ENCODE measurements at regions of chr2 and their contacts with region 1.

Region 1: DNA sequence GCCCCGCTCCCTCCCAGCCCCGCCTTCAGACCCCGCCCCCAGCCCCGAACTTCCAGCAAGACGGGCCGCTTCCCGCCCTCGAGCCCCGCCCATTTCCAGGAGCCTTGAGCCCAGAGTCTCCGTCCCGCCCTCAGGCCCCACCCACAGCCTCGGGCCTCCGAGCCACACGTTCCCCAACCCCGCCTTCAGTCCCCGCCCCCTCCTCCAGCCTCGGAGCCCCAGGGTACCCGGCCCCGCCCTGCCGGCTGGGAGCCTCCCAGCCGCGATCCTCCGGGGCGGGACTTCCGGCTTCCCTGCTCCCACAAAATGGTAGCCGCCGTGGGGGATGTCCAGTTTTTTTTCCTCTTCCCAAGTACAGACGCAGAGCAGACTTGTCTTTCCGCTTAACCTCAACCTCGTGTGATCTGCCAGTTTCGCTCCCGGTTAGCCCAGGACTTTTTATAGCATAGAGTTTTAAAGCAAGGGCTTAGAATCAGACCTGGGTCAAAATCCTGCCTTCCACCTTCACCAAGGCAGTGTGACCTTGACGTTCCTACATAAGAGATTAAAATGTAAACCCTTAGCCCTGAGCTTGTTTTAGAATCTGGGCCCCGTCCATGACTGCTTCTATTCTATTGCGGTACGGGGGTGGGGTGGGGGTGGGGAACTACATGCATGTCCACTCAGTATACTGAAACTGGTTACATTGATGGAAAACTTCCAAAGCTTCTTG is 435 bp upstream of the GPR155 start:
- DNase-seq: peak; percentile 100
- ATAC-seq: peak; percentile 94
- H3K4me3 Mint-ChIP-seq: peak overlapping the region; percentile 98
- H3K27ac Mint-ChIP-seq: peak overlapping the region; percentile 94
- H3K4me1 Mint-ChIP-seq: peaks cover 52% of the 10 kb centered on the region
- H3K27me3 Mint-ChIP-seq: no peaks in the 10 kb centered on the region

Region 2: DNA sequence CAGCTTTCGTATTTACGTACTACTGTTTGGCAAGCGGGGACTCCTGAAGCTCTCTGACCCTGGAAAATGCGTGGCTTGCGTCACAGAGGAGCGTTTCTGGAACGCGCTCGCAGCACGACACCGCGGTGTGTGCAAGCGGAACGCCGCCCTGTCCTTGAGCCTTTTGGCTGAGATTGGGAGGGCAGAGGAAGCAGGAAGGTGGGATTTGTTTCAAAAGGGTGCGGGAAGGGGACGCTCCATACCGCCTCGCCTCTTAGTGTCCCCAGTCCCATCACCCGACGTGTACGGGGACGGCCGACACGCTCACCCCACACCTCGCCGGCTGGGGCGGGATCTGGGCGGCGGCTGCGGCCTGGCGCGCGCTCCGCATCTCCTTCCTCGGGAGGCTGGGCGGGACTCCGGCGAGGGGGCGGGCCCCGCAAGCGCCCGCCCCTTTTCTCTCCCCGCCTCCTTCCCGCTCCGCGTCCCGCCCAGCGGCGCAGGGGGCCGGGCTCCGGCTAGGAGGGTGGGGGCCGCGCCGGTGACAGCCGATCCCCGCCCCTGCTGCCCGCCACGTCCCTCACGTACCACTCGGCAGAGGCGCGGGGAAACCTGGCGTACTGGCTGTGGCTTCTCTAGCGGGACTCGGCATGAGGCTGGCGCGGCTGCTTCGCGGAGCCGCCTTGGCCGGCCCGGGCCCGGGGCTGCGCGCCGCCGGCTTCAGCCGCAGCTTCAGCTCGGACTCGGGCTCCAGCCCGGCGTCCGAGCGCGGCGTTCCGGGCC is 1931.6 kb before region 1 on chr2 and contains the start of gene PDK1:
- CTCF ChIA-PET with region 1: no interaction called
- POLR2A ChIA-PET with region 1: no interaction called
- intact Hi-C with region 1: loop called in 1 of 2 experiments (anchors 1 kb)
- DNase-seq: peak; percentile 96
- ATAC-seq: peak; percentile 89
- H3K4me3 Mint-ChIP-seq: peak within 1 kb of the TSS; percentile 88
- H3K27ac Mint-ChIP-seq: peak within 1 kb of the TSS; percentile 95
- H3K4me1 Mint-ChIP-seq: peaks cover 57% of the 10 kb centered on the region
- H3K27me3 Mint-ChIP-seq: peaks cover 6% of the 10 kb centered on the region
- total RNA-seq, gene PDK1: 56.8 to 85.5 TPM

Region 3: DNA sequence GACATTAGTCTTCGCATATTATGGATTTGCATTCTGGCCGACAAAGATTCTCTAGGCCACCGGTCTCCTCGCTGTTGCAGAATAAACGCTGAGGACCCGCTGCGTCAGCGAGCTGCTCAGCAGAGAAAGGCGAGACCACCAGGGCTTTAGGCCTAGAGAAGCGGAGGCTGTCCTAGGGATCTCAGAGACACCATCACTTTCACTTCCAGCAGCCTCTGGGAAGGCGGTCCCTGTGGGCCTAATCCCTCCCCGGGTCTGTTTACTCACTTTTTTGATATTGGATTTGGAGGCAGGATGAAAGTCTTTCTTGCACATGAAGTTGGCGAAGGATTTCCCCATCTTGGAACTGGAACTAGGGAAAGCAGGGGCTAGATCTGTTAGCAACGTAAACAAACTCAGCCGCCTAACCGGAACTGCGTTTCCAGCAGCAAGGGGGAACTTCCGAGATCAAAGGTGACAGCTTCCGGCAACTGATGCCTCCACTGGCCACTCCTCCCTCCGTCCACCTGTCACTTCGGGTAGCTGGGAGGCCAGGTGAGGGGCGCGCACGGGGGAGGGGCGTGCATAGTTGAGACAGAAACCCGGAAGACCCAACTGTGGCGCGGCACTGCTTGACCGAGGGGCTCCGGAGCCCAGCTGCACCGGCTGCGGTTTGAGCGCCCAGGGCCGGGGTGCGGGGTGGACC is 91.8 kb before region 1 on chr2 and contains the start of gene SCRN3:
- CTCF ChIA-PET with region 1: interaction called, 3 read pairs
- POLR2A ChIA-PET with region 1: no interaction called
- intact Hi-C with region 1: loop called (anchors 1 to 2 kb)
- DNase-seq: peak; percentile 85
- ATAC-seq: peak; percentile 93
- H3K4me3 Mint-ChIP-seq: peak within 1 kb of the TSS; percentile 100
- H3K27ac Mint-ChIP-seq: peak within 1 kb of the TSS; percentile 99
- H3K4me1 Mint-ChIP-seq: peaks cover 35% of the 10 kb centered on the region
- H3K27me3 Mint-ChIP-seq: no peaks in the 10 kb centered on the region
- total RNA-seq, gene SCRN3: 12.7 to 14.1 TPM

Region 4: DNA sequence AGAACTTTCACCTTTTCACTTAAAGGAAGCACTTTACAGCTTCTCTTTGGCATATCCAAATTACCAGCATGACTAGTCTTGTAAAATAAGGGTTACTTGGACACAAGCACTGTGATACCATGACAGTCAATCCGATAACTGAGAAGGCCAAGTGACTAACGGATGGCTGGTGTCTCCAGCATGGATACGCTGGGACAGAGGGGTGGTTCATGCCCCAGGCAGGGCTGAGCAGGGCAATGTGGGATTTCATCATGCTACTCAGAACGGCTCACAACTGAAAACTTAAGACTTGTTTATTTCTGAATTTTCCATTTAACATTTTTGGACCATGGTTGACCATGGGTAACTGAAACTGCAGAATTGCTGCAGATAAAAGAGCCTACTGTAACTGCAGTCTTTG is 42.7 kb after region 1 on chr2:
- CTCF ChIA-PET with region 1: no interaction called
- POLR2A ChIA-PET with region 1: no interaction called
- intact Hi-C with region 1: no loop called
- DNase-seq: no peak
- ATAC-seq: no peak
- H3K4me3 Mint-ChIP-seq: no peak overlapping the region
- H3K27ac Mint-ChIP-seq: no peak overlapping the region
- H3K4me1 Mint-ChIP-seq: peaks cover under 1% of the 10 kb centered on the region
- H3K27me3 Mint-ChIP-seq: no peaks in the 10 kb centered on the region

Region 5: DNA sequence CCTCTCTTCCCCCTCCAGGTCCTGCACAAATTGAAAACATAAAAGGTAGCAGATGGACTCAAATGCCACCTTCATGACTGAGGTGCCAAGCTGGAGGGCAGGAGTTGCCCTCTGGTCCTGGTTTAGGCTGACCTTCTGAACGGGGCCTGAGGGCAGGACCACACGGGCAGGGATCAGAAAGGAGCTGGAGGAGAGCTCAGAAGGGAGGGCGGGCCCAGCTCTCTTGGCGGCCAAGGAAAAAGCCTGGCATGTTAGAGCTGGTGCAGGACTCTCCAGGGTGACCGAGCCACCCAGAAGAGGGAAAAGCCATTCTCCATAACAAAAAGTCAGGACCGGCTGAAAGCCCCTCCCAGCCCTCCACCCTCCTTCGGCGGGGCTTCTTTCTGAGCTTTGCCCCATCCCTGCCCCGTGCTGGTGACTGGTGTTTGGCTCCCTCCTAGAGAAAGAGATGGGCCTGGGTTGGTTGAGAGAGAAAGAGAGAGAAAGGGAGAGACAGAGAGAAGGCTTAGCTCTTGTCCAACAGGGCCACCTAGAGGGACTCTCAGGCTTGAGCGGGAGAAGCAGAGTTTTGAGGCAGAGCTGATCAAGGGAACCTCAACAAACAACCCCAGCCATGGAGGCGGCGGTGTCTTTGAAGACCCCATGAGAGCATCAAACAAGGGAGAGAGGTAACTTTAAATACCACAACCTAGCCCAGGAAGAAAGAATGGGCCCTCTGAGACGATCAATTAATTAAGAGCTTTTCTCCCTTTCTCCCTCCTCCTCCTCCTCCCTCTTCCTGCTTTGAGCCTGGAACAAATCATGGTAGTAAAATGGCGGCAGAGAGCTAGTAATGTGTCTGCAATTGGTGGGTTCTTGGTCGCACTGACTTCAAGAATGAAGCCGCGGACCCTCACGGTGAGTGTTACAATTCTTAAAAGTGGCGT is 59.6 kb after region 1 on chr2:
- CTCF ChIA-PET with region 1: interaction called, 10 read pairs
- POLR2A ChIA-PET with region 1: no interaction called
- intact Hi-C with region 1: no loop called
- DNase-seq: peak; percentile 67
- ATAC-seq: peak; percentile 79
- H3K4me3 Mint-ChIP-seq: no peak overlapping the region
- H3K27ac Mint-ChIP-seq: peak overlapping the region; percentile 15
- H3K4me1 Mint-ChIP-seq: peaks cover 7% of the 10 kb centered on the region
- H3K27me3 Mint-ChIP-seq: no peaks in the 10 kb centered on the region

Region 6: GRCh38 chr2:174593574-174594203 is 106.4 kb after region 1 on chr2:
- CTCF ChIA-PET with region 1: interaction called, 6 read pairs
- POLR2A ChIA-PET with region 1: interaction called, 3 read pairs
- intact Hi-C with region 1: loop called (anchors 1 to 2 kb)
- DNase-seq: peak; percentile 80
- ATAC-seq: peak; percentile 67
- H3K4me3 Mint-ChIP-seq: peak overlapping the region; percentile 70
- H3K27ac Mint-ChIP-seq: peak overlapping the region; percentile 97
- H3K4me1 Mint-ChIP-seq: peaks cover 63% of the 10 kb centered on the region
- H3K27me3 Mint-ChIP-seq: no peaks in the 10 kb centered on the region

Region 7: DNA sequence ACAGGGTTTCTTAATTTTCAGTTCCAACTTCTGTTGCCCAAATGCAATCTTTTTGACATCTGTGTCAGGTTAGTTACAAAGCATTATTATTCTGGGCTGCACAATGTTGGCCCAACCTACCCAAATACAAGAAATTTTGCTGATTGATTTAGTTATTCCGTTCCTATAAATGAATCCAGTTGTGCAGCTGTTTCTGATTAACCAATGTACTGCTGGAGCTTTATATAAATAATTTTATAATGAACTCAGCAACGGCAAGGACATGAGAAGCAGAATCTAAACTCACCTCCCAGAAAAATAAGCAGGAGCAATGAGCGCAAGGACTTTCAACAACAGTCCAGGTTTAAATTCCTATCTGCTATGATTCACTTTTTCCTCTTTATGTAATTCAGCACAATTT is 186.6 kb after region 1 on chr2:
- CTCF ChIA-PET with region 1: no interaction called
- POLR2A ChIA-PET with region 1: no interaction called
- intact Hi-C with region 1: no loop called
- DNase-seq: no peak
- ATAC-seq: no peak
- H3K4me3 Mint-ChIP-seq: no peak overlapping the region
- H3K27ac Mint-ChIP-seq: no peak overlapping the region
- H3K4me1 Mint-ChIP-seq: peaks cover 29% of the 10 kb centered on the region
- H3K27me3 Mint-ChIP-seq: no peaks in the 10 kb centered on the region

Region 8: DNA sequence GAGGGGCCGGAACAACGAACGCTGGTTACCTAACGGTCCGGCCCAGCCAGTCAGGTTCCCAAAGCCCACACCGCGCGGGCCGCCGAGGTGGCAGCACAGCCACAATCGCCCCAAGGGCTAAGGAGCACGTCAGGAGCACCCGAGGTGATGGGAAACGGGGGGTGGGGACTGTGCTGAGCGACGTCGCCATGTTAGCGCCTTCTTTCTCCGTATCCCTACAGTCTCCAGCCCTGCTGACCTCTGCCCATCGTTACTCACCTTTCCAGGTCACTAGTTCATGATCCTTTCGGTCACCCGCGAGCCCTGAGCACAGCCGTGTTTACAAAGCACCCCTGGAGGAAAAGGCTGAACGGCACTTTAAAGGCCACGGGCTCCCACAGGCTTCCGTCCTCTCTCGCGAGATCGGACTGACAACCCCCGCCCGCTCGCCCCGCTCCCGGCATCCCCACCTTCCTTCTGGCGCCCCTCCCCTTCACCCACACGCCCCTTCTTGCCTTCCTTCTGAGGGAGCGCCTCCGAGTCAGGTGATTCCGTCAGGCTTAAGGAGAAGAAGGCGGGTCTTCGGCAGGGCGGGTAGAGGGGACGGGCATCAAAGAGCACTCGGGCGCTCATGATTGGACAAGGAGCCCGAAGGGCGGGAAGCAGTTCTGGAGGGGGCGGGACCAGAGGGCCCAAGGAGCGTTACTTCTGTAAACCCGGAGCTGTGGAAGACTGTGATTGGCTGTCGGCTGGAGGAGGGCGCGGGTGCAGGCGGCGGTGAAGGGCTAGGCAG is 680.7 kb after region 1 on chr2 and contains the start of gene ATF2:
- CTCF ChIA-PET with region 1: no interaction called
- POLR2A ChIA-PET with region 1: no interaction called
- intact Hi-C with region 1: loop called (anchors 1 to 5 kb)
- DNase-seq: peak; percentile 98
- ATAC-seq: peak; percentile 95
- H3K4me3 Mint-ChIP-seq: peak within 1 kb of the TSS; percentile 95
- H3K27ac Mint-ChIP-seq: peak within 1 kb of the TSS; percentile 99
- H3K4me1 Mint-ChIP-seq: peaks cover 35% of the 10 kb centered on the region
- H3K27me3 Mint-ChIP-seq: no peaks in the 10 kb centered on the region
- total RNA-seq, gene ATF2: 52.2 to 67.5 TPM